ENCODE measurements at regions of chr4 and their contacts with region 1.

Region 1: GRCh38 chr4:105471566-105472176 is 2.2 kb downstream of the PPA2 start:
- DNase-seq: peak in 1 of 2 donors; percentile 70
- ATAC-seq: peak; percentile 71
- H3K4me3 ChIP-seq: peak overlapping the region; percentile 9 to 44
- H3K27ac ChIP-seq: no peak overlapping the region
- H3K4me1 ChIP-seq: peaks cover 2 to 4% of the 10 kb centered on the region in 2 donors
- H3K27me3 ChIP-seq: no peaks in the 10 kb centered on the region

Region 2: DNA sequence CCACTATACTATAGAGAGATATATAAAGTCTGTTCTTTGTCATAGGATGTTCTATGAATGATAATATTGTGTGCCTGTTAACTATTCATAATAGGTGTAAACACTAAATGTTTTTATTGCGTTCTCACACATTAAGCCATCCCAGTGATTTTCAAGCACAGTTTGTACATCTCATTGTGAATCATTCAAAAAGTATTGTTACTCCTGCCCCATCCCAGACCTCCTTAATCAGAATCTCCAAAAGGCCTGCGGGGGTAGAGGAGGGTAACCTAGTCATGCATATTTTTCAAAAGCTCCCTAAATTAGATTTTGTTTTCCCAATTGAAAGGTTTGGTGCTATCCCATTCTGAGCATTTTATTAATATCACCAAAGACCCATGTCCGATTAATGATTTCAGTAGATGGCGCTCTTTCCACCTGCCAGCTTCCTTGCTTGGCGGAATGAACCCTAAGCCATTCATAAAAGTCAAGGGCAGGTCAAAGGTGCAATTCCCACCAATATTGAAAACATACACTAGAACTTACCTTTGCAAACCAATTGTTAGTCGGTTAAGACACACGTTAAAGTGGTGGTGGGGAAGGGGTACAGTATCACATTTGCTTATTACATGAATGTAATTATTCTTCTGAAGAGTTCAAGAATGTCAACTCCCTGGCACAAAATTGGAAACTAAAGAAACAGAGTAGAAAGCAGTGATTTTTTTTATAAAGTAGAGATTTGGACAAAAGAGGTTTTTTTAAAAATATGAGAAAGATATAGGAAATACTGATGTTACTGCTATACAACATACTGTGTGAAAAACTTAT is 330.8 kb before region 1 on chr4:
- intact Hi-C with region 1: loop called (anchors 1 to 2 kb)
- DNase-seq: no peak
- ATAC-seq: peak; percentile 42
- H3K4me3 ChIP-seq: no peak overlapping the region
- H3K27ac ChIP-seq: no peak overlapping the region
- H3K4me1 ChIP-seq: no peaks in the 10 kb centered on the region
- H3K27me3 ChIP-seq: no peaks in the 10 kb centered on the region

Region 3: DNA sequence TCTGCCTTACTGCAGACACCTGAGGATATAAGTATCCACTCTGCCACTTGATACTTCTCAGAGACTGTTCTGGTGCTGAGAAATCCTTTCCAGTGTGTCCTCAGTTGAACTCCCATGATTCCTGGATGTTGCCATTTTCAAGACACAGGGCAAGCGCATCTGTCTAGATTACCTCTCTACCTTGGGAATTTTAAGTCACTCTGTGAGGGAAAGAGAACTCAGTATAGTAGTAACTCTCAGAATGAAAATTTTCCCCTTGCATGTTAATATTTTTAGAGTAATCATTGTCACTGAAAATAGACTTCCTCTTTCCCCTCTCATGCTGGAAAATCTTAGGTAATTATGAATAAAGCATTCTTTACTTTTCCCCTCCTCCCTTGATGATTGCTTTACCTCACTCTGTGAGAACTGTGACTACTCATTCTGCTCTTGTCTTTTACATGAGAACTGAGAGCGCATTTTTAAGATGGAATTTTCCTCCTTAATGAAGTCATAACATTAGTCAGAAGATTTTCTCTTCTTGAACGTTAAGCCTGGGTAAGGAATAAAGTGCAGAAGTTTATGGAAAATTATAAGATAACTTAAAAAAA is 280.0 kb before region 1 on chr4:
- intact Hi-C with region 1: loop called in 1 of 2 experiments (anchors 5 kb)
- DNase-seq: no peak
- ATAC-seq: peak; percentile 43
- H3K4me3 ChIP-seq: peak overlapping the region in 1 of 2 donors; percentile 14
- H3K27ac ChIP-seq: peak overlapping the region; percentile 17 to 82
- H3K4me1 ChIP-seq: peaks cover 5 to 7% of the 10 kb centered on the region in 2 donors
- H3K27me3 ChIP-seq: no peaks in the 10 kb centered on the region

Region 4: DNA sequence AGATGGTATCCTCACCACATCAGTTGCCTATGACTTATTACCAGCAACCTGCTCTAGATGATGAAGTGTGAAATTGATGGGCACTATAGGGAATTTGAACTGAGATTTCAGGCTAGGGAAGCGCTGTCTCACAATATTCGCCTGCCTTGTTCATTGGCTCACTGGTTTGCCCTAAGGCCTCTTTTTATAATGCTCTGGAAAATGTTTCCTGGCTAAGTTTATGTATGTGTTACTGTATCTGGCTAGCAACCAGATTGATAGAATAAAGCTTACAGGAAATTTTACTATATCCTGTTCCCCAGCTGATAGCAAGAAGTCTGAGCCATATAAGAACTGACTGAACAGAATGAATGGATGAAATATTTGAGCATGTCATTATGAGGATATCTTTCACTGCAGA is 308.5 kb after region 1 on chr4:
- intact Hi-C with region 1: no loop called
- DNase-seq: no peak
- ATAC-seq: no peak
- H3K4me3 ChIP-seq: no peak overlapping the region
- H3K27ac ChIP-seq: no peak overlapping the region
- H3K4me1 ChIP-seq: no peaks in the 10 kb centered on the region
- H3K27me3 ChIP-seq: no peaks in the 10 kb centered on the region

Measured in aorta (tissue), 5 donors.